Psoas muscle (tissue), 8 donors: ENCODE measurements at regions of chr14 and their contacts with region 1.

Region 1: GRCh38 chr14:26709019-26709418 is 111.2 kb upstream of the NOVA1 start:
- DNase-seq: no peak
- ATAC-seq: no peak
- H3K4me3 ChIP-seq: no peak overlapping the region
- H3K27ac ChIP-seq: no peak overlapping the region
- H3K4me1 ChIP-seq: no peaks in the 10 kb centered on the region
- H3K27me3 ChIP-seq: no peaks in the 10 kb centered on the region
- CTCF ChIP-seq: no peak

Region 2: GRCh38 chr14:26828741-26829140 is 119.7 kb after region 1 on chr14:
- intact Hi-C with region 1: no loop called
- DNase-seq: no peak
- ATAC-seq: no peak
- H3K4me3 ChIP-seq: no peak overlapping the region
- H3K27ac ChIP-seq: no peak overlapping the region
- H3K4me1 ChIP-seq: no peaks in the 10 kb centered on the region
- H3K27me3 ChIP-seq: no peaks in the 10 kb centered on the region
- CTCF ChIP-seq: no peak

Region 3: DNA sequence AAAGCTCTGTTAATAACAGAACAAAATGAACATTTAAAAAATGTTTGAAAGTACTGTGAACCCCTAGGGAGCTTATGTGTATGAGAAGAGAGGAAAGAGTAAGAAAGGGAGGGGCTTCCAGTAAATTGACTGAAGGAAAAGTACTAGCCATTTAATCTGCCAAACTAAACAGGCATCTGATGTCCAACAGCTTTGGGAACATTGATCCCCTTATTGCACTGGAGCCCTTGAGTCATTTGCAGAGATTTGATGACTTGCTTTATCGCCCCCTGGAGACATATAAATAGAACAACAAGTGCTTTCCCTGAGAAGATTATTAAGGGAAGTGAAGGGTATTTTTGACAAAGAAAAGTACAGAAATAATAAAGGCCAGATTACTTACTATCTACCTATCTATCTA is 208.1 kb after region 1 on chr14:
- intact Hi-C with region 1: no loop called
- DNase-seq: no peak
- ATAC-seq: peak; percentile 28 to 77 (median 56)
- H3K4me3 ChIP-seq: no peak overlapping the region
- H3K27ac ChIP-seq: no peak overlapping the region
- H3K4me1 ChIP-seq: no peaks in the 10 kb centered on the region
- H3K27me3 ChIP-seq: no peaks in the 10 kb centered on the region
- CTCF ChIP-seq: no peak

Region 4: GRCh38 chr14:27528328-27528727 is 819.3 kb after region 1 on chr14:
- intact Hi-C with region 1: loop called in 1 of 2 experiments (anchors 10 kb)
- DNase-seq: no peak
- ATAC-seq: no peak
- H3K4me3 ChIP-seq: no peak overlapping the region
- H3K27ac ChIP-seq: no peak overlapping the region
- H3K4me1 ChIP-seq: no peaks in the 10 kb centered on the region
- H3K27me3 ChIP-seq: no peaks in the 10 kb centered on the region
- CTCF ChIP-seq: no peak